ENCODE measurements at regions of chr3 and their contacts with region 1.

Region 1: DNA sequence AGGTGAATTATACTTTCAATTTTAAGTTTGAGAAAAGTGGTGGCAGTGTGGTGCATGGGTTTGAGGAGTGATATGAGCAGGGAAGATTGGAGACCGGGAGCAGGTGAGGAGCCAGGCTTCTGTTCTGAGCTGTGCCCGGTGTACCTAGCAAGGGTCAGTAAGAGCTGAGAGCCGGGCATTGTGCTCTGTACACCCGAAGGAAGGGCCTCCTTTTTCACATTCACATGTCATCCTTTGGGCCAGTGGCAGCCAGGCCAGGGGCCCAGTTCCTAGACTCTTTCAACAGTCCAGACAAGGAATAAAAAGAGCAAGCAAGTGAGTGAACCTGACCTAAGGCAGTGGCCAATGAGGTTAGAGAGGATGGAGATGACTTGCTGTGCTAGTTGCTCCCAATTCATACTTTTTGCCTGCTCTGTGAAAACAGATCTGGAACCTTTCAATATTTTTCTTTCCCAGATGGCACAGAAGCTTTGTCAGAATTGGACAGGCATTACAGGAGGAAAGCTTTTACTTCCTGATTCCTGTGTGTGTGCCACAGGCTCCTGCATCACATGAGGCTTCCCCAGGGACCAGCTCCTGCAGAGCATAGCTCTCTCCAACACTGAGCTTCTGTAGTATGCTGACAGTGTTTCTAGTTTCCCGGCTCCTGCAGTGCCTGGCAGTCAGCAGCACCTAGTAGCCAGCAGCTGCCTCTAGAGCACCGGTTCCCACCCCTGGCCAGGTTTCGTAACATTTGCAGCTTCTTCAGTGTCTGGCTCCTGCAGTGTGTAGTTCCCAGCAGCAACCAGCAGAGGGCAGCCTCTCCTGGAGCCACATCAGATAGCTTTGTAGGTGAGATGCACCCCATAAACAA is 5.3 kb upstream of the TRA2B start:
- DNase-seq: no peak
- H3K4me3 ChIP-seq: no peak overlapping the region
- H3K27me3 ChIP-seq: no peaks in the 10 kb centered on the region; the same call in 1 of the 2 replicates
- CTCF ChIP-seq: peak; percentile 100

Region 2: GRCh38 chr3:185677146-185677829 is 265.8 kb before region 1 on chr3:
- CTCF ChIA-PET with region 1: interaction called, 11 read pairs
- POLR2A ChIA-PET with region 1: no interaction called
- DNase-seq: no peak
- H3K4me3 ChIP-seq: no peak overlapping the region
- H3K27me3 ChIP-seq: no peaks in the 10 kb centered on the region
- CTCF ChIP-seq: peak; percentile 81

Region 3: DNA sequence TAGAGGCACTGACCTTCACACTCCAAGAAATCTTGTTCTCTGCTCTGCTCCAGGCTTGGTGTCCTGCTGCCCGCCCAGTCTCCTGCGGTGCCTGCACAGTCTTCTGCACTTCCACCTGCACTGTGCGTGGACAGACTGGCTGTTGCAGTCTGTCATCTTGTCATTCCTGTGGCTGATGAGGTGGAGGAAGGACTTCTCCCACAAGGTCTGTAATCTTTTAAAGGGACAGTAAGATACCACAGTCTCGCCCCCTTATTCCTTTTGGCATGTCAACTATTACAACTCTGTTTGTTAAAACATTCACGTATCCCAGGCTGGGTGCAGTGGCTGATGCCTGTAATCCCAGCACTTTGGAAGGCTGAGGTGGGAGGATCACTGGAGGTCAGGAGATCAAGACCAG is 64.2 kb before region 1 on chr3:
- CTCF ChIA-PET with region 1: no interaction called
- POLR2A ChIA-PET with region 1: no interaction called
- DNase-seq: no peak
- H3K4me3 ChIP-seq: no peak overlapping the region
- H3K27me3 ChIP-seq: no peaks in the 10 kb centered on the region
- CTCF ChIP-seq: no peak

Region 4: DNA sequence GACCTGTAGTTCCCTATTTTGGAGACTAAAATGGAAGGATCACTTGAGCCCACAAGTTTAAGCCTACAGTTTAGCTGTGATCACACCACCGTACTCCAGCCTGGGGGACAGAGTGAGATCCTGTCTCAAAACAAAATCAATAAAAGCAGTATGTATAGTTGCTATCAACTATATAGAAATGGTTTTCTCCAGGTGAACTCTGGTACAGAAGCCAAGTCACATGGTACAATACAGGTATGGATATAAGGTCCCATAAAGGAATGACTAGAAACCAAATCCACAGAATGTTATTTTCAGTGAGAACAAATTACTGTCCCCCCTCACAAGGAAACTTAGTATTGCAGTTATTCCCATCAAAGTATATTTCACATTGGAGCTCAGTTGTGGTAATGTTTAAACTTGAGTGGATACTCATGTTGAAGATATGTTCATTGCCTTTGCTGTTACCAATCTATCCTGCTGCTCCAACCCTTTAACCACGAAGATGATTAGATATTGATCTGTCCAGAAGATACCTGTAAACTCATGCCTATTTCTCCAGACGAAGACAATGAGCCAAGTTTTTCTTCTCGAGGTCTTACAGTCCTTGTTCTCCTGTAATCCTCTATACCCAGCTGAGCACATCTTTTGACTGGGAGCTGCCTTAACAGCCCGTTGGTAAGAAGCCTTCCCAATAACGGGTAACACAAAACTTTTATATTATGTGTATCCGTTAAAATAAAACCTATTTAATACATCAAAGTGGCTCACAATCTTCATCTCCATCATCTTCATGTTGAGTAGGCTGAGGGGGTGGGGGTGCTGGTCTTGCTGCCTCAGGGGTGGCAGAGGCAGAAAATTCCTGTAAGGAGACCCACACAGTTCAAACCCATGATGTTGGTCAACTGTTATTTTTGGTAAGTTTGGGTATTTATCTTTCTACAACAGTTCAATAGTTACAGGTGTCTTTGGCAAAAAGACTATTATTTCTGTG is 29.9 kb before region 1 on chr3:
- CTCF ChIA-PET with region 1: no interaction called
- POLR2A ChIA-PET with region 1: no interaction called
- DNase-seq: no peak
- H3K4me3 ChIP-seq: no peak overlapping the region
- H3K27me3 ChIP-seq: no peaks in the 10 kb centered on the region
- CTCF ChIP-seq: no peak

Region 5: DNA sequence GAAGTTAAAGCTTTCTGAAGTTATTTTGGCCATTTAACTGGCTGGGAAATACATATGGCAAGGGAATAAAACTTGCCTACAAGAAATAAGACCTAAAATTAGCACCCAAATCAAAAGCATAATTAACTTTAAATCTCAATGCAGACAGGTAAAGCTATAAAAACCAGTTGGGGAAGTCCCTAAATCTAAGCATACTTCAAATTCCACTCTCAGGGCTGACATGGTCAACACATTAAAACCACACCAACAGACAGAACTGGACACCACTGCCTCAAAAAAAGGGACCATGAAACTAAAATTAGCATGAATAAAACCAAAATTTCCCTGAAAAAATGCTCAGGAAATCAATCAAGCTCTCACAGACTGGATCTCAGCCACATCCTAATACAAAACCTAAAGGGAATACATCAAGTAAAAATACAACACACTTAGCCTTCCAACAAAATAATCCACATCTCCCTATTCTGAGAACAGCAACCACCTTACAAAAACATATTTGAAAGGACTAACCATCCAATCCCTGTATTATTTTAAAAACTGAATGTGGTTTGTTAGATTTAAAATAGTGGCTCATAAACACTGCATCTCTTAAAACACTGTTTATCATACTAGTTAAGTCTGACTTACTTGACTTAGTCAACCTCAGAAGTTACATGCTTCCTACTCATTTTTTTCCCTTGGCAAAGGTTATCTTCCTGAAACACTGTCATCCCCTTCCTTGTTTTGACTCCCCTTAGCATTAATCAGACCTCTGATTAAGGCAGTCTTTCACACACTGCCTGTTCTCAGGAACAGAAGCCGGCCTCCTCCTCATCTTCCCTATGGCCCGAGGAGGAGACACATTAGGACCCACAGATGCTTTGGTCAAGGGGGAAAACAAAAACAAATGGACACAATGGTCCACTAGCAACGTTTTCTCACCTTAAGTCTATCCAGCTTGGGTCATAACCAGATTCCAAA is 13.7 kb before region 1 on chr3:
- CTCF ChIA-PET with region 1: interaction called, 15 read pairs
- POLR2A ChIA-PET with region 1: no interaction called
- DNase-seq: no peak
- H3K4me3 ChIP-seq: no peak overlapping the region
- H3K27me3 ChIP-seq: no peaks in the 10 kb centered on the region
- CTCF ChIP-seq: no peak

Region 6: DNA sequence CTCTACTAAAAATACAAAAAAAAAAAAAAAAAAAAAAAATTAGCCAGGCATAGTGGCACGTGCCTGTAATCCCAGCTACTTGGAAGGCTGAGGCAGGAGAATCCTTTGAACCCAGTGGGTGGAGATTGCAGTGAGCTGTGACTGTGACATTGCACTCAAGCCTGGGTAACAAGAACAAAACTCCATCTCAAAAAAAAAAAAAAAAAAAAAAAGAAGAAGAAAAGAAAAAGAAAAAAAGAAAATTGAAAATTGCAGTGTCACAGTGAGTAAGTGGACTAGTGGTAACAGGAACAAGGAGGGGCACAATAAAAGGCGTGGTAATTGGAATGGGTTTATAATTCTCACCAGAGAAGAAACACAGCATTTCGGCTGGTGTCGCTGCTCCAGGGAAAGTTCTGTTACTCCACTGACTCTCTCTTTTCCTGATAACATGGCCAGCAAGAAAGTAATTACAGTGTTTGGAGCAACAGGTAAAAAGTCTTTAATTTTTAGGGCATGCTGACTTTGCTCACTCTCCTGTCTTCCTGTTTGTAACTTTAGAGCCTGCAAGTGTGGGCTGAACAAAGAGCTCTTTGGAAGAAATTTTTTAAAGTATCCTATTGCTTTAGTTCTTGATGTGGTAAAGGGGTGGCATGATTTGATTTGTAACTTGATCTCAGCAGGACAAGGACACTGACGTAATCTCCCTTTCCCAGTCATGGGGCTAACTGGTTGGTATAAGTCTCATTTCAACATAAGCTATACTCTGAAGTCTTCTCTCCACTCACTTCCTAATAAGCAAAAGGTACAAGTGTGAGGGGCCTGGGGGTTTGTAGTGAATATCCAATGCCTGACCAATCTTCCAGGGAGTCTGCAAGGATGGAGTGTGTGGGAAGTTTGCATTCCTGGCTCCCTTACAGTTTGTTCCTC is 16.7 kb after region 1 on chr3:
- CTCF ChIA-PET with region 1: interaction called, 98 read pairs
- POLR2A ChIA-PET with region 1: no interaction called
- DNase-seq: peak; percentile 39
- H3K4me3 ChIP-seq: no peak overlapping the region
- H3K27me3 ChIP-seq: no peaks in the 10 kb centered on the region
- CTCF ChIP-seq: no peak

Region 7: DNA sequence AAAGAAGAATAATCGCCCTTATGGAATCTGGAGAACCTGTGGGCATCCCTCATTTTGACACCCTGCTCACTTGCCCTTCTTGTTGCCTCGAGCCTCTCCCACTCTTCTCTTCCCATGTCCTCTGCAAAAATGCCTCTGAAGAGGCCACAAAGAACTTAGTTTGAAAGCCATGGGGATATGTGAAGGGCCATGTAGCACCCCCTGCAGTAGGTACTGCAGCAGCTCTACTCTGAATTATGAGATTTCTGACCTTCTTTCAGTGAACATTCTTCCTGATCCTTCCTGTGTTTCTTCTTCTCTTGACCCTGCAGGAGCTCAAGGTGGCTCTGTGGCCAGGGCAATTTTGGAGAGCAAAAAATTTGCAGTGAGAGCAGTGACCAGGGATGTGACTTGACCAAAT is 25.0 kb after region 1 on chr3:
- CTCF ChIA-PET with region 1: interaction called, 25 read pairs
- POLR2A ChIA-PET with region 1: no interaction called
- DNase-seq: no peak
- H3K4me3 ChIP-seq: no peak overlapping the region
- H3K27me3 ChIP-seq: no peaks in the 10 kb centered on the region
- CTCF ChIP-seq: no peak

Region 8: GRCh38 chr3:185976977-185977678 is 34.0 kb after region 1 on chr3:
- CTCF ChIA-PET with region 1: interaction called, 20 read pairs
- POLR2A ChIA-PET with region 1: no interaction called
- DNase-seq: no peak
- H3K4me3 ChIP-seq: no peak overlapping the region
- H3K27me3 ChIP-seq: no peaks in the 10 kb centered on the region
- CTCF ChIP-seq: peak; percentile 96

Measured in BJ (cell line).